Caco-2 (cell line): ENCODE measurements at regions of chr9 and their contacts with region 1.

Region 1: DNA sequence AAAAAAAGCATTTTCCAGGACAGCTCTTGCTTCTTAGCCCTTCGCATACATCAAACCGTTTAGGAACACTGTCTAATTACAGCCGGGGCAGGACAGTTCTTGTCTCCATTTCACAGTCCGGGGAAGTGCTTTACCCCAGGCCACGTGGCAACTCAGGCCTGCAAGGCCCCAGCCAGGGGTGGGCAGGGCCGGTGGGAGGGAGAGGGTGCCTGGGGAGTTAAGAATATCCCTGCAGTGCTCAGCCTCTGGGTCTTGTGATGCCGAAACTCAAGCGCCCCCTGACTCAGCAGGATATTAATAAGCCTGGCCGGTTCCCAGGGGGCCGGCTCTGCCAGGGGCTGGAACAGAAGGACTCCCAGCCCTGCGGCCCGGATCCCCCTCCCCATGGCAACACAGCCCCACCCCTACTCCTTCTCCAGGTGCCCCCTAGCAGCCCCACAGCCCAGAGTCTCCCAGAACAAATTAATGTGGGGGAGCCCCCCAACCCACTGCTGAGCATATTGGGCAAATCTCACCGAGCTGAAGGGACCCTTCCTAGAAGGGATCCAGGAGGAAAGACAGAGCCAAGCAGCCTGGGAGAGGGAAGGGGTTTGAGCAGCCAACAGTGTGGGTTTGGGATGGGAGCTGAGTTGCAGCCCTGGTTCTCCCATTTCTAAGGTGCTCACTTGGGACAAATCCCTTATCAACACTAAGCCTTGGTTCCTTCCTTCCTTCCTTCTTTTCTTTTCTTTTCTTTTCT is 45.3 kb downstream of the PLPP7 start:
- DNase-seq: peak in 1 of 2 experiments; percentile 23
- H3K4me3 ChIP-seq: no peak overlapping the region
- H3K4me3 Mint-ChIP-seq: no peak overlapping the region
- H3K27ac Mint-ChIP-seq: no peak overlapping the region
- H3K4me1 ChIP-seq: peaks cover 4% of the 10 kb centered on the region; the same call in 1 of the 2 replicates
- H3K4me1 Mint-ChIP-seq: peaks cover 7% of the 10 kb centered on the region
- H3K27me3 ChIP-seq: no peaks in the 10 kb centered on the region
- H3K27me3 Mint-ChIP-seq: no peaks in the 10 kb centered on the region
- CTCF ChIP-seq: no peak

Region 2: DNA sequence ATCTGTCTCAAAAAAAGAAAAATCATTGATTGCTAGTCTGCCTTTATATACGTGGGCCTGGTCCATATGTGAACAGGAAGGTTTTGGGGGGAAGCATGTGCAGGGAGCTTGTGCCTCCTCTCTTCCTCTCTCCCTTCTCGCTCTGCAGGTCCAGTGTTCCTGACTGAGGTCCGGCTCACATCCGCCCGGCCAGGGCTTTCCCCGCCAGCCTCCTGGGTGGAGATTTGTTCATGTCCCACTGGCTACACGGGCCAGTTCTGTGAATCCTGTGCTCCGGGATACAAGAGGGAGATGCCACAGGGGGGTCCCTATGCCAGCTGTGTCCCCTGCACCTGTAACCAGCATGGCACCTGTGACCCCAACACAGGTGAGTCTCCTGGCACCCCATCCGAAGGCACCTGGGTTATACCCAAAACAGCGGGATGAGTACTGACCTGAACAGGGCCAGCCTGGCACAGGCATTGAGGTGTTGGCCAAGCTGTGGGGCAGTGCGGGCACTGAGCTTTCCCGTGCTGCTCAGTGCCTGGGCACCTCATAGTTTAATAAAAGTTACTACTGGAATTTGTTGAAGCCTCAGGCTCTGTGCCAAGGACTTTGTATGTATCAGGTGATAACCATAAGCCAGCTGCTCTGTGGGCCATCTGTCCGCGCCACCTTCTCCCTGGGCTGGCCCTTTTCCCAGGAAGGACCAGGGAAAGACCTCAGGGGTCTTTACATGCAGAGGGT is 277.9 kb before region 1 on chr9:
- CTCF ChIA-PET with region 1: interaction called, 9 read pairs
- POLR2A ChIA-PET with region 1: no interaction called
- intact Hi-C with region 1: loop called (anchors 1 kb)
- DNase-seq: no peak
- H3K4me3 ChIP-seq: no peak overlapping the region
- H3K4me3 Mint-ChIP-seq: no peak overlapping the region
- H3K27ac Mint-ChIP-seq: no peak overlapping the region
- H3K4me1 ChIP-seq: no peaks in the 10 kb centered on the region
- H3K4me1 Mint-ChIP-seq: no peaks in the 10 kb centered on the region
- H3K27me3 ChIP-seq: no peaks in the 10 kb centered on the region
- H3K27me3 Mint-ChIP-seq: no peaks in the 10 kb centered on the region
- CTCF ChIP-seq: no peak

Region 3: DNA sequence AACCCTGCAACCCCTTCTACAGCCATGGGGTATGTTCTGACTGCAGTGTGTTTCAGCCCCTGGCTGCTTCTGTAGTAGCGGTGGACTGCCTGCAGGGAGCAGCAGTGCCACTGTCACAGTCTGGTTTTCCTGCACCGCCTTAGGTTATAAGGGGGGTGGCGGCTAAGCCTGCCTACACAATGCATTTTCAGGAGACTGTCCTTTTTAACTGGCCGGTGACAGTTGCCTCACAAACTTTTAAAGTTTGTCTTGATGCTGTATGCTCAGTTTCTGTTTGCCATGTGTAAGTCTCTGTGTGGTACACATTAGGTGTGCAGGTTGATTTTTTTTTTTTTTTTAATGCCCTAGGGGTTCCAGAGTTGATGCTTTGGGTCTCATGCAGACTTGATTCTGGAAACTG is 156.4 kb before region 1 on chr9:
- CTCF ChIA-PET with region 1: interaction called, 10 read pairs
- POLR2A ChIA-PET with region 1: no interaction called
- intact Hi-C with region 1: loop called (anchors 1 kb)
- DNase-seq: peak; percentile 70 to 79
- H3K4me3 ChIP-seq: no peak overlapping the region
- H3K4me3 Mint-ChIP-seq: no peak overlapping the region
- H3K27ac Mint-ChIP-seq: no peak overlapping the region
- H3K4me1 ChIP-seq: no peaks in the 10 kb centered on the region; the same call in 1 of the 2 replicates
- H3K4me1 Mint-ChIP-seq: peaks cover 6% of the 10 kb centered on the region
- H3K27me3 ChIP-seq: no peaks in the 10 kb centered on the region
- H3K27me3 Mint-ChIP-seq: no peaks in the 10 kb centered on the region
- CTCF ChIP-seq: peak; percentile 85 to 87

Region 4: GRCh38 chr9:131237931-131238401 is 96.8 kb before region 1 on chr9:
- CTCF ChIA-PET with region 1: interaction called, 4 read pairs
- POLR2A ChIA-PET with region 1: no interaction called
- intact Hi-C with region 1: loop called (anchors 10 kb)
- DNase-seq: no peak
- H3K4me3 ChIP-seq: no peak overlapping the region
- H3K4me3 Mint-ChIP-seq: no peak overlapping the region
- H3K27ac Mint-ChIP-seq: peak overlapping the region; percentile 20
- H3K4me1 ChIP-seq: no peaks in the 10 kb centered on the region
- H3K4me1 Mint-ChIP-seq: no peaks in the 10 kb centered on the region
- H3K27me3 ChIP-seq: no peaks in the 10 kb centered on the region
- H3K27me3 Mint-ChIP-seq: no peaks in the 10 kb centered on the region
- CTCF ChIP-seq: no peak

Region 5: GRCh38 chr9:131262327-131263032 is 72.3 kb before region 1 on chr9:
- CTCF ChIA-PET with region 1: no interaction called
- POLR2A ChIA-PET with region 1: no interaction called
- intact Hi-C with region 1: no loop called
- DNase-seq: no peak
- H3K4me3 ChIP-seq: no peak overlapping the region
- H3K4me3 Mint-ChIP-seq: no peak overlapping the region
- H3K27ac Mint-ChIP-seq: no peak overlapping the region
- H3K4me1 ChIP-seq: no peaks in the 10 kb centered on the region
- H3K4me1 Mint-ChIP-seq: no peaks in the 10 kb centered on the region
- H3K27me3 ChIP-seq: no peaks in the 10 kb centered on the region
- H3K27me3 Mint-ChIP-seq: no peaks in the 10 kb centered on the region
- CTCF ChIP-seq: no peak

Region 6: DNA sequence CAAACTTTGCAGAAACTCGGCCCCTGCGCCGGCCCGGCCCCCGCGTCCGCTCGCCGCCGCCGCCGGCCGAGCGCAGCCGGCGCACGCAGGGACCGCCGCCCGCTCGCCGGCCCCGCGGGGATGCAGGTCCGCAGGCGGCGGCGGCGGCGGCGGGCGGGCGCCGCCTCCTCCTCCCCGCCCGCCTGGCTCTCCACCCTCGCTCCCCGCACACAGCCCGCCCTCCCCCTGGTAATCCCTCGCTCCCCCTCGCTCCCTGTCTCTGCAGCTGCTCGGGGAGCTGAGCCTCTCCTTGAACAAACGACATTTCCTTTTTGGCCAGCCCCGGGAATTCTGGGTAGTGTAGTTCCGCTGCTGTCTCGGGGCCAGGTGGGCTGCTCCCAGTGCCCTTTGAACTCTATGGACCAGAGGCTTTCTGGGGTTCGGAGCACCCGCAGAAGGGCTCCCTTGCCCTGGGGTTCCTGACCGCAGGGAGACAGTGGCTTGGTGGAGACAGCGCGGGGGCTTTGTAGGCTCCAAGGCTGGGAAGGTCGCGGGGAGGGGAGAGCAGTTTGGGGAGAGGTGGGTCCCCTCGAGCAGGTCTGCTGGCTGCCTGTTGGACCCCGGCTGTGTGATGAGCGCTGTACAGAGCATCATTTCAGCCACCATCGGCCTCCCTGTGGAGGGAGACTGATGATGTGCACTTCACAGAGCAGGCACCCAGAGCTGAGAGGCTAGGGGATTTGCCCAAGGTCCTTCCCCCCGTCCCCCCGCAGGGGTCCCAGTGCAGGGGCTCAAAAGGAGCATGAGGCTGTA is 56.7 kb before region 1 on chr9:
- CTCF ChIA-PET with region 1: no interaction called
- POLR2A ChIA-PET with region 1: no interaction called
- intact Hi-C with region 1: loop called (anchors 5 kb)
- DNase-seq: peak; percentile 73 to 84
- H3K4me3 ChIP-seq: peak overlapping the region; percentile 54
- H3K4me3 Mint-ChIP-seq: peak overlapping the region; percentile 79
- H3K27ac Mint-ChIP-seq: no peak overlapping the region
- H3K4me1 ChIP-seq: peaks cover 7% of the 10 kb centered on the region
- H3K4me1 Mint-ChIP-seq: peaks cover 7% of the 10 kb centered on the region
- H3K27me3 ChIP-seq: peaks cover 1% of the 10 kb centered on the region
- H3K27me3 Mint-ChIP-seq: peaks cover 14% of the 10 kb centered on the region
- CTCF ChIP-seq: no peak

Region 7: GRCh38 chr9:131539223-131539923 is 204.6 kb after region 1 on chr9:
- CTCF ChIA-PET with region 1: no interaction called
- POLR2A ChIA-PET with region 1: no interaction called
- intact Hi-C with region 1: no loop called
- DNase-seq: no peak
- H3K4me3 ChIP-seq: no peak overlapping the region
- H3K4me3 Mint-ChIP-seq: no peak overlapping the region
- H3K27ac Mint-ChIP-seq: no peak overlapping the region
- H3K4me1 ChIP-seq: no peaks in the 10 kb centered on the region
- H3K4me1 Mint-ChIP-seq: no peaks in the 10 kb centered on the region
- H3K27me3 ChIP-seq: no peaks in the 10 kb centered on the region
- H3K27me3 Mint-ChIP-seq: no peaks in the 10 kb centered on the region
- CTCF ChIP-seq: no peak